ENCODE measurements at regions of chr3 and their contacts with region 1.

Region 1: GRCh38 chr3:143001369-143002082 is at the start of gene U2SURP:
- DNase-seq: peak; percentile 94
- H3K4me3 ChIP-seq: peak within 1 kb of the TSS; percentile 96
- H3K27ac ChIP-seq: peak within 1 kb of the TSS; percentile 97
- H3K27me3 ChIP-seq: no peaks in the 10 kb centered on the region
- CTCF ChIP-seq: 0 out of 2 replicates have a peak, but pooled peaks have one; percentile 12
- polyA plus RNA-seq, gene U2SURP: 51.3 and 71.9 TPM in 2 replicates

Region 2: DNA sequence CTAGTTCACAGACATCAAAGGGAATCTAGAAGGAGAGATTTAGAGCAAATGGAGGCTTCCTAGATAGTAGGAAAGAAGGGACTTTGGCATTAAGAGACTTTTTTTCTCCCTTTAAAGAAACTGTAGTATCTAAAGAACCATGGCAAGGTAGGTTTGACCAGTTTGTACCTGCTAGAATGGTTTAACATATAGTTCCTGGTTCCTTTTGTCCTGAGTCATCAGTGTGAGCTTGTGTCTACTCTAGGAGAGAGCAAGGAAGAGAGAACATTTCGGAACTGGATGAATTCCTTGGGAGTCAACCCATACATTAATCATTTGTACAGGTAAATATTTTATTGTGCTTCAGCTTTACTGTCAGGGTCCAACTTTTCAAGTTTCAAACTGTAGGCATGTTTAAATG is 307.3 kb before region 1 on chr3:
- CTCF ChIA-PET with region 1: no interaction called
- POLR2A ChIA-PET with region 1: no interaction called
- DNase-seq: no peak
- H3K4me3 ChIP-seq: no peak overlapping the region
- H3K27ac ChIP-seq: no peak overlapping the region
- H3K27me3 ChIP-seq: no peaks in the 10 kb centered on the region
- CTCF ChIP-seq: no peak

Region 3: GRCh38 chr3:143016321-143016972 is 14.9 kb after region 1 on chr3:
- CTCF ChIA-PET with region 1: interaction called, 18 read pairs
- POLR2A ChIA-PET with region 1: no interaction called
- DNase-seq: no peak
- H3K4me3 ChIP-seq: no peak overlapping the region
- H3K27ac ChIP-seq: no peak overlapping the region
- H3K27me3 ChIP-seq: no peaks in the 10 kb centered on the region
- CTCF ChIP-seq: peak; percentile 46

Region 4: GRCh38 chr3:143040261-143040879 is 38.8 kb after region 1 on chr3:
- CTCF ChIA-PET with region 1: interaction called, 10 read pairs
- POLR2A ChIA-PET with region 1: interaction called, 3 read pairs
- DNase-seq: no peak
- H3K4me3 ChIP-seq: no peak overlapping the region
- H3K27ac ChIP-seq: no peak overlapping the region
- H3K27me3 ChIP-seq: no peaks in the 10 kb centered on the region
- CTCF ChIP-seq: peak; percentile 61

Region 5: GRCh38 chr3:143207338-143207961 is 205.9 kb after region 1 on chr3:
- CTCF ChIA-PET with region 1: no interaction called
- POLR2A ChIA-PET with region 1: no interaction called
- DNase-seq: peak; percentile 32
- H3K4me3 ChIP-seq: no peak overlapping the region
- H3K27ac ChIP-seq: no peak overlapping the region
- H3K27me3 ChIP-seq: no peaks in the 10 kb centered on the region
- CTCF ChIP-seq: no peak

Region 6: DNA sequence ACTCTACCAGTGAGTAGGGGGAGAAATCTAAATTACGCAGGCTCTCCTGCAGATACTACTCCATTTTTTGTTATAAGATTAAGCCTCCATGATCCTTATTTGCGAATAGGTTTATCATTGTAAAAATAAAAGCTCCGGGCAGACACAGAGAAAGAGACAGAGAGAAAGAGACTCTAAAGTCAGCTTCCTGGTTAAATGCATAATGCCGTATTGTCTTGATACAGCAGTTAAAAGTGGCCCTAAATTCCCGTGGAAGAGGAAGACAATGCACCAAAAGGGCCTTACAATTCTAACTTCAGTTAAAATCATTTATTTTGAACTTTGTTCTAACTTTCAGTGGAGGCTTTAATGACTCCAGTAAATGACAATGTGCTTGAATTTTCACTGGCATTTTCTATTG is 748.4 kb after region 1 on chr3:
- CTCF ChIA-PET with region 1: interaction called, 11 read pairs
- POLR2A ChIA-PET with region 1: no interaction called
- DNase-seq: no peak
- H3K4me3 ChIP-seq: no peak overlapping the region
- H3K27ac ChIP-seq: no peak overlapping the region
- H3K27me3 ChIP-seq: no peaks in the 10 kb centered on the region
- CTCF ChIP-seq: no peak